CD4-positive, alpha-beta memory T cell (primary cell): ENCODE measurements at regions of chr1 and their contacts with region 1.

Region 1: DNA sequence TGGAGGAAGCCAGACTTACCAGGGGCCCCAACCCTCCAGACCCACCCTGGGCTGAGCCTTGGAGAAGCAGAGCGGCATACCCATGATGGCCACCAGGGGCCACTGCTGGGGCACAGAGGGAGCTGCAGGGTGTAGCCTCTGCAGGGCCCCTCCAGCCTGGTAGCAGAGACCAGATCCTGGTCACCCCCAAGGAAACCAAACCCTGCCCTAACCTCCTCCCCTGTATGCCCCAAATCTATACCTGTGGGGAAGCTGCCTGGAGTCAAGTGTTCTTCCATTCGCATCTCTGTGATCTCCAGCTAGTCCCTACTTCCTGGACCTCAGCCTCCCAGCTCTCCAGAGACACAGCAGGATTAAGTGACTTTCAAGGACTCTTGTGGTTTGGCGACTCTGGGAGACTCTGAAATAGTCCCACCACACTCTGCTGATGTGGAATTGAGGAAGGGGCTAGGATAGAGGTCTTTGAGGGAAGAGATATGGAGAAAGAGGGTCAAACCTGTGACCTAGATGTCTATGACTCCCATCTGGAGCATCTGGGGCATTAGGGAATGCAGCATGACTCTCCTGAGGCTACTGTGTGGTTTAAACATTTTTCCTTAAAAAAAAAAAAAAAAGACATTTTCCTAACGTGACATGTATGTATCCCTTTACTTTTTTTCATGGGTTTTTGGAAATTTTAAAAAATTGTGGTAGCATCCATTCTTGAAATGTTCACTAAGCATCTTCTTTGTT is 119.2 kb upstream of the IPO9 start:
- DNase-seq: peak in 4 of 5 donors; percentile 35 to 41 (median 36)
- H3K4me3 ChIP-seq: no peak overlapping the region
- H3K4me3 Mint-ChIP-seq: no peak overlapping the region
- H3K27ac ChIP-seq: no peak overlapping the region
- H3K27ac Mint-ChIP-seq: no peak overlapping the region
- H3K4me1 ChIP-seq: no peaks in the 10 kb centered on the region
- H3K4me1 Mint-ChIP-seq: no peaks in the 10 kb centered on the region
- H3K27me3 ChIP-seq: no peaks in the 10 kb centered on the region
- H3K27me3 Mint-ChIP-seq: peaks cover 0 to 2% of the 10 kb centered on the region in 2 donors

Region 2: DNA sequence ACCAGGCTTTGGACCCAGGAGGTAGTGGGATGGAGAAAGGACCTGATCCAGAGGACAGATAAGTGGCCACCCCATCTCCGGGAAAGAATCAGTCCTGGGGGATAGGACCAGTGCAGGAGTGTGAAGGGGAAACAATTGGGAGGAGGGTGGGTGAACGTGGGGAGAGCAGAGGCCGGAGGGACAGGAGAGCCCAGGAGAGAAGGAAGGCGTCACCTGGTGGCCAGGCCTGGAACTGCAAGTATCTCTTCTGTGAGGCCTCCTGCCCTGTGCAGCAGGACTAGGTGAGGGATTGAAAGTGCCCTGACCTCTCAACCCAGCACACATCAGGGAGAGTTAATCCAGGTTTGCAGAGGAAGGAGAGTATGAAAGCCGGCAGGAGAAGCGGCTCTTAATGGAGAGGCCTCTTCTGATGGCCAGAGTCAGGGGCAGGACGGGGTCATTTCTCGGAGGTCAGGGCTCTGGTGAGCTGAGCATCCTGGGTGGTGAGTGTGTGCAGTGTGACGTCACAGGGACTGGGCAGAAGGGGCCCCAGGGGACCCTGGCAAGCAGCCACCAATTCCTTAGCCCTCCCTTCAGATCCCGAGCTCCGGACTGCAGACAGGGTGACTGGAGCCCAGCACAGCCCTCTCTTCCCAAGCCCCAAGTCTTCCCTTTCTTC is 301.4 kb before region 1 on chr1:
- CTCF ChIA-PET with region 1: no interaction called
- POLR2A ChIA-PET with region 1: no interaction called
- intact Hi-C with region 1: no loop called
- DNase-seq: peak; percentile 41 to 62 (median 48)
- H3K4me3 ChIP-seq: no peak overlapping the region
- H3K4me3 Mint-ChIP-seq: no peak overlapping the region
- H3K27ac ChIP-seq: no peak overlapping the region
- H3K27ac Mint-ChIP-seq: no peak overlapping the region
- H3K4me1 ChIP-seq: no peaks in the 10 kb centered on the region
- H3K4me1 Mint-ChIP-seq: peaks cover 0 to 5% (median under 1%) of the 10 kb centered on the region in 4 donors
- H3K27me3 ChIP-seq: no peaks in the 10 kb centered on the region
- H3K27me3 Mint-ChIP-seq: peaks cover 3 to 8% of the 10 kb centered on the region in 2 donors

Region 3: DNA sequence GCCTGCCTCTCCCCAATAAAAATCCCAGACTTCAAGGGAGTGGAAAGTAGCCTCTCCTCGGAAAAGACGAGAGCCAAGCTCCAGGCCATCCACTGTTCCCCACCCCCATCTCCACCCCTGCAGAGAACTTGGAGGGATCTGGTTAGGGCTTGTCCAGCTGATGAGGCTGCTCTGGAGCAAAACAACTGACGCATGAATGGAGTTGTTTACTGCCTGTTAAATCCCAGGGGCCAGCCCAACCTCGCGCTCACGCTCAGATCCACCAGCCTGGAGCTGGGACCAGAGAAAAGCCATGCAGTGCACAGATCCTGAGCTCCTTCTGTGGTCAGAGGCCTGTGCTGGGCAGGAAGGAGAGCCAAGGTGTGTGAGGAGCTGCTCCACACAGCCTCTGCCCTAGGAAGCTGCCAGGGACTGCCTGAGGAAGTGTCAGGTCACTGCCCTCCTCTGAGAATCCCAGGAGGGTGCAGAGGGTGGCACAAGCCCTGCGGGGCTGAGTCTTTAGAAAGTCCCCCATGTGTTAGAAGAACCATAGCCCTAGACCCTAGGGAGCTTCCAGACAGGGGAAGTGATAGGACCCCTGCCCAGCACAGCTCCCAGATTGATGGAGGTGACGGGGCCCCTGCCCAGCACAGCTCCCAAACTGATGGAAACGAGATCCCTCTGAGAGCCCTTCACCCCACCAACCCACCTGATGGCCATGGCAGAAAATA is 10.2 kb after region 1 on chr1:
- CTCF ChIA-PET with region 1: interaction called, 18 read pairs
- POLR2A ChIA-PET with region 1: interaction called, 3 read pairs
- intact Hi-C with region 1: no loop called
- DNase-seq: no peak
- H3K4me3 ChIP-seq: no peak overlapping the region
- H3K4me3 Mint-ChIP-seq: no peak overlapping the region
- H3K27ac ChIP-seq: no peak overlapping the region
- H3K27ac Mint-ChIP-seq: no peak overlapping the region
- H3K4me1 ChIP-seq: no peaks in the 10 kb centered on the region
- H3K4me1 Mint-ChIP-seq: no peaks in the 10 kb centered on the region
- H3K27me3 ChIP-seq: no peaks in the 10 kb centered on the region
- H3K27me3 Mint-ChIP-seq: peaks cover 0 to under 1% of the 10 kb centered on the region in 2 donors

Region 4: DNA sequence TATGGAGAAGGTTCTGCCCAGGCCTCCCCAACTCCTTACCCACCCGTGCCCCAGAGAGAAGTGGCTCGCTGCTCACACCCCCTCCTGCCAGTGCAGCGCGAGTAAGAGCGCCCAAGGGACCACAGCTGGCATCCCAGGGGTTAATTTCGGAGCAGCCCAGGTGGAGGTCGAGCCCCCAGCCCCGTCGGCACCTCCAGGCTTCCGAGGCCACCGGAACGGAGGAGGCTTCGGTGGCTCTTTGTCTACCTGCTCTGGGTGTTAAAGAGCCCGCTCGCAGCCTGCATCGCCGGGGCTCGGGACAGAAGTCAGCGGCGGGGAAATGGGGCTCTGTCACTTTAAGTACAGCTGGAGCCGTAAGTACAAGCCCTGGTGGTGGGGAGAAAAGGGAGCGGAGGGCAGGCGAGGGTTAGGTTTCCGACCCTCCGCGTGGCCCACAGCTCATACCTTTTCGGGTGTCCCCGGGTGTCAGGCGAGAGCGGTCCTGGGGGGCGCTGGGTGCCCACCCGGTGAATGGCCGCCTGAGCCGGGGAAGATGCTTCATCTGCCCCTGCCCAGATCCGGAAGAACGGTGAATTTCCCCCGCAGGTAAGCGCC is 29.9 kb after region 1 on chr1:
- CTCF ChIA-PET with region 1: interaction called, 10 read pairs
- POLR2A ChIA-PET with region 1: no interaction called
- intact Hi-C with region 1: no loop called
- DNase-seq: peak; percentile 50 to 61 (median 58)
- H3K4me3 ChIP-seq: peak overlapping the region; percentile 30 to 74
- H3K4me3 Mint-ChIP-seq: peak overlapping the region; percentile 88 to 97 (median 94)
- H3K27ac ChIP-seq: no peak overlapping the region
- H3K27ac Mint-ChIP-seq: peak overlapping the region in 4 of 7 donors; percentile 31 to 81 (median 49)
- H3K4me1 ChIP-seq: peaks cover 15% of the 10 kb centered on the region
- H3K4me1 Mint-ChIP-seq: peaks cover 8 to 36% (median 19%) of the 10 kb centered on the region in 4 donors
- H3K27me3 ChIP-seq: peaks cover 5% of the 10 kb centered on the region
- H3K27me3 Mint-ChIP-seq: peaks cover 5 to 11% of the 10 kb centered on the region in 2 donors